Pancreas (tissue), 10 donors: ENCODE measurements at regions of chr16 and their contacts with region 1.

Region 1: DNA sequence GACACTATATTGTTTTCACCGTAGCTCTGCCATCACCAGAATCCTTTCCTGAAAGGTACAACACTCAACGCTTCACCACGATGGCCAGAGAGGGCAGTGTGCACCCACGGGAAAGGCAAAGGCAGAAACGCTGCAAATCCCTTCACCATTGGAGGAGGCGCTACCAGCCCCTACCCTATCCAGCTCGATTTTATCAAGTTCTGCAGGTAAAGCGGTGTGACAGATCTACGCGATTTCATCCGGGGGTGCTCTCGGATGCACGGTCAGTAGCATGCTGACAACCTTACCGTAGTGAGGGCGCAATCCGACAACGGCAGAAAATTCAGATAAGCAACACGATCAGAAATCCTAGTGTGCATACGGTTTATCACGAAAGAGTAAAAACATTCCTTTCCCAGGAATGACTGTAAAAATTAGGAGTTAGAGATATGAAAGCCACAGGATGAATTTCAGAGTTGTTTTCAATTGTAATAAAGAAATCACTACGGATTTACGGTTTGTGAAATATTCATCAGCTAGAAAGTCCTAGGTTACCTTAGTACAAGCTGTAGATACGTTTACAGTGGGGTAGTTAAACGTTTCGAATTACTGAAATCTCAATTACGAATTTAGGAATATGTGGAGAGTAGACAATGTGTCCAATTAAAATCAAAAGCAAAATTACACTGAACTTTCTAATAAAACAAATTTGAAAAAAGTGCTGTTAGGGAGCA is 1.8 kb downstream of the NETO2 start:
- DNase-seq: peak; percentile 71 to 87 (median 80)
- ATAC-seq: peak; percentile 90 to 97 (median 92)
- H3K4me3 ChIP-seq: peak overlapping the region in 2 of 4 donors; percentile 39 to 54
- H3K27ac ChIP-seq: no peak overlapping the region
- H3K4me1 ChIP-seq: peaks cover 0 to 14% (median 12%) of the 10 kb centered on the region in 3 donors
- H3K27me3 ChIP-seq: peaks cover 0 to 6% (median 0%) of the 10 kb centered on the region in 4 donors
- CTCF ChIP-seq: peak; percentile 52 to 89 (median 78)

Region 2: DNA sequence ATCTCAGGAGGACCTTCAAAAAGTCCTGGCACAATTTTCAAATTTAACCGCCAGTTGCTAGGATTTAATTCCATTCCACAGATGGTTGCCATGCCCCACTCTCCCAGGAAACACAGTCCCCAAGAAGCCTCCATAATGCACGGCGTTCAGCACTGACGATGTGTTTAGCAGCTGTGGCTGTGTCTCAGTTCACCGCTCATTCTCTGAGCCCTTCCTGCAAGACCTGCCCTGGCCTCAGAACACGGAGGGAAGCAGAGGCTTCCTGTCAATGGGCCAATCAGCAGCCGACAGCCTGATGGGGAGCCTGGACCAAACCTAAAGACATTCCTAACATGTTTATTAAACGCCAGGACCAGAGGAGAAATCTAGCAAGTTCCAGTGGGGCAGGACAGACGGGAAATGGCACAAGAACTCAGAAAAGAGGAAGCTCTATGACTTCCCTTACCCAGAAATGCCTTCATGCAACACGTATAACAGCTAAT is 398.6 kb before region 1 on chr16:
- intact Hi-C with region 1: no loop called
- DNase-seq: peak in 2 of 6 donors; percentile 31 to 40
- ATAC-seq: peak in 2 of 4 donors; percentile 56 to 66
- H3K4me3 ChIP-seq: no peak overlapping the region
- H3K27ac ChIP-seq: peak overlapping the region in 2 of 4 donors; percentile 39 to 53
- H3K4me1 ChIP-seq: no peaks in the 10 kb centered on the region
- H3K27me3 ChIP-seq: peaks cover 0 to 4% (median 0%) of the 10 kb centered on the region in 4 donors
- CTCF ChIP-seq: no peak

Region 3: DNA sequence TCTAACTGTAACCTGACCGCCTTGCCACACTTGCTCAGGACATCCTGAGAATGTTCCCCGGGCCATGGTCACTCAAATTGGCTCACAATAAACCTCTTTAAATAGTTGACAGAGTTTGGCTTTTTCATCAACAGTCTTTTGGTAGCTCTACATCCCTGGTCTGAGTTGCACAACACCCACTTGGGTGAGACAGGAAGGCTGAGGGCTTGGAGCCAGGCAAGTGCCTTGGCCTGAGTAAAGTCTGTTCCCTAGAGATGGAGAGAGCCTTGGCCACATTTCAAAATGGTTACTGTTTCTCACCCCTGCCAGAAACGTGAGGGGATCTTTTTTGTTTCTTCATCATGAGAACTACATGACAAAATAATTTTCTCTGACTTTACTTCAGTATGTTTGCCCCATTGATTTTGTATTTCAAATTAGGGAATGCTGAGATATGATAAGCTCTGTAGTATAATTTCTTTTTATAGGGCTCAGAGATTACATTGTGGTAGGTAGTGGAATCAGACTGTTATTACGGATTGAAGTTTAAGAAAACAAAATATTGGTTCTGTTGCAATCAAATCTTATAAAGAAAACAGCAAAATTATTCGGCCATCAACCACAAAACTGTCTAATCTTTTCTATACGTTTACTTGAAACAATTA is 55.7 kb after region 1 on chr16:
- intact Hi-C with region 1: no loop called
- DNase-seq: no peak
- ATAC-seq: no peak
- H3K4me3 ChIP-seq: no peak overlapping the region
- H3K27ac ChIP-seq: no peak overlapping the region
- H3K4me1 ChIP-seq: no peaks in the 10 kb centered on the region
- H3K27me3 ChIP-seq: no peaks in the 10 kb centered on the region
- CTCF ChIP-seq: no peak

Region 4: DNA sequence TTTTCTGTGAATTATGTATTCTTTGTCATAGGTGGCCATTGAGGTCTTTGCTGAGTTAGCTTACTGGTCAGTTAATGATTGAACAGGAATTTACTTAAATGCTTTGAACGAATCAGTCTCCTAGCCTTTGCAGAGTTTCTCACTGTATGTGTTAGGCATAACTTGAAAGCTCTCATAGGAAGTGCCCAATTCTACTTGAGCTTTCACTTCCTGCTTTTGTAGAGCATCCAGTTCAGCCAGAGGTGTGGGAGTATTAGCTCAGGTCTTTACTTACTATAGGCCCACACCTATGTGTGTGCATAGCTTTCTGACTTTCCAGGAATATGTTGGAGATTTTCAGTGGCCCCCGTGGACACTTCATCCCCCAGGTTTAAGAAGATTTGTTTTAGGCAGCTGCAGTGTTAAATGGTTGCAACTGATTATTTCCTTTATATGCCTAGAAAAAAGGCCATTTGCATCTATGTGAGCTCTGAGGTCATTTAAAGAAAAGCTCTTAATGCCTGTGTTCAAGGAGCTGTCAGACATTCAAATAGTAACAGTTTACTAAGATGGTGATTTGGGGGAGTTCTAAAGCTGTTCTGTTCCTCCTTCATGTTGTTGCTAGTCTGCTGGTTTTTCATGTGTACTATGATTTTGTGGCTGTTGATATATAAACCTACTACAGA is 381.5 kb after region 1 on chr16:
- intact Hi-C with region 1: no loop called
- DNase-seq: no peak
- ATAC-seq: peak in 3 of 4 donors; percentile 47 to 70 (median 57)
- H3K4me3 ChIP-seq: no peak overlapping the region
- H3K27ac ChIP-seq: no peak overlapping the region
- H3K4me1 ChIP-seq: peaks cover 0 to 10% (median 0%) of the 10 kb centered on the region in 3 donors
- H3K27me3 ChIP-seq: no peaks in the 10 kb centered on the region
- CTCF ChIP-seq: no peak

Region 5: DNA sequence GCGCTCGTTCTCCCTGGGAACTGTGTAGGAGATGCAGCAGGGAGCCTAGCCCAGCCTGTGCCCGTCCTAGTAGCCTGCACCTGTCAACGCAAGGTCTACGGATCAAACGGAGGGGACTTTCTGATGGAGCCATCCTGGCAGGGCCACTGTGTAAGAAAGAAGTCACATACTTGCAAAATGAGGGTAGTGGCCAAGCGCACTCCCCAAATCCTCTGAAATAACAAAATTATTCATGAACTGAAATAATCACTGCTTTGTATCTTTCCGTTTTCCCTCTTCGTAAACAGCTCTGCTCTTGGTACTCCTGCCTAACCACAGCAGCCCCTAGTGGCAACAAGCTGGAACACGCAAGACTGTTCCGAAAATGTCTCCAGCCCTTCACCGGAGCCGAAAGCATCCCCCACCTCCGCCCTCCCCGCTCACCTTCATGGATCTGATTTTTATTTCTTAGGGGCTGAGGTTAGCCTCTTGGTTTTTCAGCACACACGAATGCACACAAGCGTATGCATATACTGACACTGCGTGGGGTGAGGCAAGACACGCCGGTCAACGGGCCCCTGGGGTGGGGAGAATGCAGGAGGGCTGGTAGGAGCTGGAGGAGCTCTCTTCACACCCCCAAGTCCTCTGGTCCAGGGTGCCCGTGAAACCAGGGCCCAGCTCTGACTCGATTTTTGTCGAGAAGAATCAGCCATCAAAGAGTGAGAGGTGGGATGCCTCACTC is 913.1 kb after region 1 on chr16:
- intact Hi-C with region 1: loop called in 1 of 3 experiments (anchors 5 kb)
- DNase-seq: peak in 4 of 6 donors; percentile 11 to 54 (median 30)
- ATAC-seq: peak; percentile 67 to 91 (median 88)
- H3K4me3 ChIP-seq: no peak overlapping the region
- H3K27ac ChIP-seq: no peak overlapping the region
- H3K4me1 ChIP-seq: no peaks in the 10 kb centered on the region
- H3K27me3 ChIP-seq: no peaks in the 10 kb centered on the region
- CTCF ChIP-seq: peak; percentile 50 to 73 (median 58)

Region 6: GRCh38 chr16:48156790-48157209 is 1014.9 kb after region 1 on chr16:
- intact Hi-C with region 1: loop called in 1 of 3 experiments (anchors 5 kb)
- DNase-seq: peak; percentile 66 to 99 (median 88)
- ATAC-seq: peak; percentile 73 to 97 (median 94)
- H3K4me3 ChIP-seq: no peak overlapping the region
- H3K27ac ChIP-seq: no peak overlapping the region
- H3K4me1 ChIP-seq: no peaks in the 10 kb centered on the region
- H3K27me3 ChIP-seq: no peaks in the 10 kb centered on the region
- CTCF ChIP-seq: peak; percentile 90 to 95 (median 92)